ENCODE measurements at regions of chr5 and their contacts with region 1.

Region 1: DNA sequence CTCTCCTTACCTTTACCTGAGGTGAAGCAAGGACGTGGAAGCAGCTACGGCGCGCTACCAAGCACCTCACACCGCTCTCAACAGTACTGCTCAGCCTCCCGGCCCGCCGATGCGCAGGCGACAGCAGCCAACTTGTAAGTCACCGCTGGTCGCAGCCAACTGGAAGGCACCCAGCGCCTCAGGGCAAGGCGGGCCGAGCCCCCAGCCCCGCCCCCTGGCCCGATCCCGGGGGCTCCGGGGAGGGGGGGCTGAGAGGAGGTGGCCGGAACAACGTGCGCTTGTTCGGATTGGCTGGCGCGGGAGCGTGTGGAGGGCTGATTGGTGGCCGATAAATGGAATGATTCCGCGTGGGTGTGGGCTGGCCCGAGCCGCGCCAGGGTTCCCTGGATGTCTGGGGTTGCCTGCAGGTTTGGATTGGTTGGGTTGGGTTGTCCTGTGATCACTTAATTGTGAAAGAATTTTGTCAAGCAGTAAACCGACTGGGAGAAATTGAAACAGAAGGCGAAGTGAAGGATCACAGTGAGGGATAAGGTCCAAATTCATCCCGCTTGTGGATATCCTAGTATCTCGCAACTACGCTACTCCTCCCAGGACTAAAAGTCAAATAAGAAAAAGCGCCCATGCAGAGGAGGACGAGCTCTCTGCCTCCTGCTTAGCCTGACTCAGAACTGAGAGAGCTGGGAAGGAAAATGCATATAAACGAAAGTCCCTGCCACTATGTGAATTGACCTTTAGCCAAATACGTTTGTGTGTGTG is at the start of gene STARD4:
- DNase-seq: peak; percentile 94
- H3K4me3 Mint-ChIP-seq: peak within 1 kb of the TSS; percentile 88
- H3K27ac Mint-ChIP-seq: peak within 1 kb of the TSS; percentile 99
- H3K4me1 Mint-ChIP-seq: peaks cover 61% of the 10 kb centered on the region
- H3K27me3 Mint-ChIP-seq: no peaks in the 10 kb centered on the region
- total RNA-seq, gene STARD4: 149 and 163 TPM in 2 replicates

Region 2: GRCh38 chr5:111092062-111092853 is 420.3 kb before region 1 on chr5 and contains the start of gene WDR36:
- intact Hi-C with region 1: loop called (anchors 5 kb)
- DNase-seq: peak; percentile 83
- H3K4me3 Mint-ChIP-seq: peak within 1 kb of the TSS; percentile 98
- H3K27ac Mint-ChIP-seq: peak within 1 kb of the TSS; percentile 97
- H3K4me1 Mint-ChIP-seq: peaks cover 42% of the 10 kb centered on the region
- H3K27me3 Mint-ChIP-seq: peaks cover 2% of the 10 kb centered on the region
- total RNA-seq, gene WDR36: 82.5 and 85.7 TPM in 2 replicates

Region 3: GRCh38 chr5:111229871-111230810 is 282.4 kb before region 1 on chr5:
- intact Hi-C with region 1: loop called (anchors 1 kb)
- DNase-seq: no peak
- H3K4me3 Mint-ChIP-seq: peak overlapping the region; percentile 79
- H3K27ac Mint-ChIP-seq: peak overlapping the region; percentile 96
- H3K4me1 Mint-ChIP-seq: peaks cover 97% of the 10 kb centered on the region
- H3K27me3 Mint-ChIP-seq: no peaks in the 10 kb centered on the region

Region 4: DNA sequence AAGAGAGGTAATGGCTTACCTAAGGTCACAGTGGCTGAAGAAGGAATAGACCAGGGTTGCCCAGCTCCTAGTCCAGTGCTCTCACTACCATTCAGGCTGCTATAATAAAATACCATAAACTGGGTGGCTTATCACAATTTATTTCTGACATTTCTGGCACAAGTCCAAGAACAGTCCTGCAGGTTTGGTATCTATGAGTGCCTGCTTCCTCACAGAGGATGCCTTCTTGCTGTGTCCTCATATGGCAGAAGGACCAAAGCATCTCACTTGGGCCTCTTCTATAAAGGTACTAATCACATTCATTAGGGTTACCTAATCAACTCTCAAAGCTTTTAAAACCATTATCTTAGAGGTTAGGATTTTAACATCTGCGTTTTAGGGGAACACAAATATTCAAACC is 17.4 kb before region 1 on chr5:
- intact Hi-C with region 1: loop called (anchors 1 kb)
- DNase-seq: no peak
- H3K4me3 Mint-ChIP-seq: no peak overlapping the region
- H3K27ac Mint-ChIP-seq: no peak overlapping the region
- H3K4me1 Mint-ChIP-seq: peaks cover 43% of the 10 kb centered on the region
- H3K27me3 Mint-ChIP-seq: no peaks in the 10 kb centered on the region

Region 5: GRCh38 chr5:111757355-111758283 is 245.1 kb after region 1 on chr5:
- intact Hi-C with region 1: loop called (anchors 1 kb)
- DNase-seq: peak; percentile 84
- H3K4me3 Mint-ChIP-seq: peak overlapping the region; percentile 87
- H3K27ac Mint-ChIP-seq: peak overlapping the region; percentile 86
- H3K4me1 Mint-ChIP-seq: peaks cover 29% of the 10 kb centered on the region
- H3K27me3 Mint-ChIP-seq: peaks cover 4% of the 10 kb centered on the region